Activated CD4-positive, alpha-beta memory T cell treated with anti-CD3 and anti-CD28 coated beads for 36 hours (primary cell): ENCODE measurements at regions of chr6 and their contacts with region 1.

Region 1: GRCh38 chr6:31079656-31080261 is 32.6 kb downstream of the C6orf15 start:
- DNase-seq: peak; percentile 77
- H3K4me3 Mint-ChIP-seq: peak overlapping the region; percentile 43
- H3K27ac Mint-ChIP-seq: no peak overlapping the region
- H3K4me1 Mint-ChIP-seq: peaks cover 9% of the 10 kb centered on the region
- H3K27me3 Mint-ChIP-seq: peaks cover 2% of the 10 kb centered on the region

Region 2: DNA sequence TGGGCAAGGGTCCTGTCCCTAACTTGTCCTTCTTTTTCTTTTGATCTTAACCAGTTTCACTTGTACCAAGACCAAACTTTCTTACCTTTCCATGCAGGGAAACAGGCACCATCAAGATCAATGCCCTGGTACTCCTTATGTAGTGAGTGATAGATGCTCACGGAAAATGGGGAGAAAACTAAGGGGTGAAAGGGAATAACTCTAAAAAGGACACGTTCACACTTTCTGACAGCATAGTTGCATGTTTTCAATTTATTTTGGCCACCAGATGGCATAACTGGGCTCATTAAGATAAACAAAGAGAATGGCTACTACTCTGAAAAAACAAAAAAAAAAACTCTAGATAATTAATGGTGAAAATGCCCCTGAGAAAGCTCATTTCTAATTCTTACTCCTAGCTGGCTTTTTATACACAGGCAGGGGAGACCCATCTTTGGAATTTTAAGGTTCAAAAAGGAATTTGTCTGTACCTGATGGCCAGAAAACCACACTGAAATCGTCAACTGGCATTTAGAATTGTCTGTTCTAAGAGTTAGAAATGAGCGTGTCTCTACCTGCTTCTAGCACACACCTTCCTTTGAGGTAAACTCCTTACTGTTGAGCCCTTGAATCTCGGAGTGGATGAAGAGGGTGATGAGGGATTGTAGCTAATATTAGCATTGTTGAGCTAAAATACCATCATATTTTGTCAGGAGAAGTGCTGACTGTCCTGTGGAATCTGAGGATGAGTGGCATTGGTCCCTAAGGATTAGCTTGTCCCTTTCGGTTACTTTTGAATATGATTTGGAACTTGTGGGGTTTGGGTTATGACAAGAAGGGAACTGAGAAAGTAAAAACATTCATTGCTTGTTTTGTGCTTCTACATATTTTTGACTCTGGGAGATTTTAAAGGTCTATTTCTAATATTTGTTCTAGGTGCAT is 257.6 kb before region 1 on chr6:
- CTCF ChIA-PET with region 1: interaction called, 21 read pairs
- POLR2A ChIA-PET with region 1: no interaction called
- intact Hi-C with region 1: no loop called
- DNase-seq: no peak
- H3K4me3 Mint-ChIP-seq: no peak overlapping the region
- H3K27ac Mint-ChIP-seq: peak overlapping the region; percentile 78
- H3K4me1 Mint-ChIP-seq: peaks cover 76% of the 10 kb centered on the region
- H3K27me3 Mint-ChIP-seq: no peaks in the 10 kb centered on the region

Region 3: DNA sequence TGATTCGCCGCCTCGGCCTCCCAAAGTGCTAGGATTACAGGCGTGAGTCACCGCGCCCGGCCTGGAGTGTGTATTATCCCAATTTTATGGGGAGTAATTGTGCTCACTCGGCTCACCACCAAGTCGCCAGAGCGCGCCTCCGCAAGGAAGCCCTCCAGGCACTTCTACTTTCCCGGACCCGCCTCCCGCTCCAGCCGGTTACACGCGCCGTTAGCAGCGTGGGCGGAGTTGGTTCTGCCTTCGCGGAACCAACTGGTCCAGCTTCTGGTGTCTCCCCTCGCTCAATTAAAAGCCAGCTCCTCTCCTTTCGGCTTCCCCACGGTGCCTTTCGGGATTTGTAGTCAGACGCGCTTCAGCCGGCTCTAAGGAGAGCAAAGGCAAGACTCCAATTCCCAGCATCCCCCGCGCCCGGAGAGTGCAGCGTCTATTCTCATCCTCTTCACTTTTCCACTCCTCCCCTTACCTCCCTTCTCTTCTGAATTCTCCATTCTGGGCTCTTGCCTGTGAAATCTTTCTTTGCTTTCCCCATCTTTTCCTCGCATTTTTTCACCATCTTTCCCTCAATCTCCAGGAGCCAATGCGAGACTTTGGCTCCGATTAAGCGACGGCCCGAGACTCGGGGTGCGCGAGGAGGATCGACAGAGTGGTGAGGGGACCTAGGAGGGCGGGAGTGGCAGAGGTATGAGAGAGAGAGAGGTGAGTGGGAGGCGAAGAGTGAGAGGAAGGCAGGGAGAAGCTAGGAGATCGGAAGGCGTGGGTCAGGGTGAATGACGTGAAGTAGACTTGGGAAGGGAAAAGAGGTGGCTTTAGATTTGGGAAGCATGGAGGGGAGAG is 171.8 kb before region 1 on chr6 and contains the start of gene GTF2H4:
- CTCF ChIA-PET with region 1: interaction called, 82 read pairs
- POLR2A ChIA-PET with region 1: no interaction called
- intact Hi-C with region 1: no loop called
- DNase-seq: peak; percentile 97
- H3K4me3 Mint-ChIP-seq: peak within 1 kb of the TSS; percentile 95
- H3K27ac Mint-ChIP-seq: peak within 1 kb of the TSS; percentile 77
- H3K4me1 Mint-ChIP-seq: peaks cover 16% of the 10 kb centered on the region
- H3K27me3 Mint-ChIP-seq: no peaks in the 10 kb centered on the region
- total RNA-seq, gene GTF2H4: 35.2 to 39.2 TPM

Region 4: GRCh38 chr6:30955367-30956042 is 124.3 kb before region 1 on chr6:
- CTCF ChIA-PET with region 1: interaction called, 21 read pairs
- POLR2A ChIA-PET with region 1: no interaction called
- intact Hi-C with region 1: no loop called
- DNase-seq: peak; percentile 82
- H3K4me3 Mint-ChIP-seq: peak overlapping the region; percentile 66
- H3K27ac Mint-ChIP-seq: no peak overlapping the region
- H3K4me1 Mint-ChIP-seq: peaks cover 6% of the 10 kb centered on the region
- H3K27me3 Mint-ChIP-seq: peaks cover under 1% of the 10 kb centered on the region

Region 5: GRCh38 chr6:31068669-31069340 is 11.0 kb before region 1 on chr6:
- CTCF ChIA-PET with region 1: interaction called, 32 read pairs
- POLR2A ChIA-PET with region 1: no interaction called
- intact Hi-C with region 1: no loop called
- DNase-seq: peak; percentile 81
- H3K4me3 Mint-ChIP-seq: no peak overlapping the region
- H3K27ac Mint-ChIP-seq: no peak overlapping the region
- H3K4me1 Mint-ChIP-seq: no peaks in the 10 kb centered on the region
- H3K27me3 Mint-ChIP-seq: no peaks in the 10 kb centered on the region